Gastrocnemius medialis (tissue), 4 donors: ENCODE measurements at regions of chr11 and their contacts with region 1.

Region 1: GRCh38 chr11:115759622-115760460 is 255.6 kb upstream of the CADM1 start:
- DNase-seq: no peak
- ATAC-seq: peak; percentile 34 to 36
- H3K4me3 ChIP-seq: peak overlapping the region; percentile 53 to 68 (median 60)
- H3K27ac ChIP-seq: no peak overlapping the region
- H3K4me1 ChIP-seq: peaks cover 6 to 9% of the 10 kb centered on the region in 2 donors
- H3K27me3 ChIP-seq: peaks cover 0 to 8% (median 6%) of the 10 kb centered on the region in 3 donors
- CTCF ChIP-seq: no peak
- POLR2A ChIP-seq: no peak

Region 2: GRCh38 chr11:115606498-115607220 is 153.2 kb before region 1 on chr11:
- in situ Hi-C with region 1: no loop called
- intact Hi-C with region 1: loop called (anchors 5 kb)
- DNase-seq: peak in 1 of 2 donors; percentile 24
- ATAC-seq: peak; percentile 53 to 57
- H3K4me3 ChIP-seq: no peak overlapping the region
- H3K27ac ChIP-seq: peak overlapping the region in 2 of 4 donors; percentile 40 to 49
- H3K4me1 ChIP-seq: peaks cover 15 to 18% of the 10 kb centered on the region in 2 donors
- H3K27me3 ChIP-seq: no peaks in the 10 kb centered on the region
- CTCF ChIP-seq: no peak
- POLR2A ChIP-seq: no peak

Region 3: GRCh38 chr11:115623021-115623451 is 136.8 kb before region 1 on chr11:
- in situ Hi-C with region 1: no loop called
- intact Hi-C with region 1: loop called (anchors 5 kb)
- DNase-seq: peak; percentile 72 to 86
- ATAC-seq: peak; percentile 99 to 100
- H3K4me3 ChIP-seq: no peak overlapping the region
- H3K27ac ChIP-seq: peak overlapping the region; percentile 57 to 74 (median 68)
- H3K4me1 ChIP-seq: peaks cover 11 to 12% of the 10 kb centered on the region in 2 donors
- H3K27me3 ChIP-seq: no peaks in the 10 kb centered on the region
- CTCF ChIP-seq: peak in 1 of 5 experiments; percentile 20
- POLR2A ChIP-seq: no peak

Region 4: DNA sequence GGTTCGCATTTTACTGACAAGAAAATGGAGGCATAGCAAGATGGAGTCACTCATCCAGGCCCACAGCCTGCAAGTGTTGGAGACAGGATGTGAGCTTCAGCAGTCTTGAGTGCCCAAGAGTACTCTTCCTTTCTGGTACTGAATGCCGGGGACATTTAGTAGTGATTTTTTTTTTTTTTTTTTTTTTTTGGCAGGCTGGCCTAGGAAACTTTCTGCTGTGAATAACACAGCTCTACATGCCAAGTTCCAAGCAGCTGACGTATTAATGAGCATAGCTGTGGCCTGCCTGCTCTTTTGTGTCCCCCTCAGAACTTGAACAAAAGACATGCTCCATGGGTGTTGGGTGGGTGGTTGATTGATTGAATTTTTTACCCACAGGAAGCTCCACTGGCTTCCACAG is 60.1 kb before region 1 on chr11:
- in situ Hi-C with region 1: no loop called
- intact Hi-C with region 1: no loop called
- DNase-seq: no peak
- ATAC-seq: peak; percentile 36 to 81
- H3K4me3 ChIP-seq: no peak overlapping the region
- H3K27ac ChIP-seq: no peak overlapping the region
- H3K4me1 ChIP-seq: peaks cover 5 to 20% of the 10 kb centered on the region in 2 donors
- H3K27me3 ChIP-seq: no peaks in the 10 kb centered on the region
- CTCF ChIP-seq: no peak
- POLR2A ChIP-seq: no peak

Region 5: DNA sequence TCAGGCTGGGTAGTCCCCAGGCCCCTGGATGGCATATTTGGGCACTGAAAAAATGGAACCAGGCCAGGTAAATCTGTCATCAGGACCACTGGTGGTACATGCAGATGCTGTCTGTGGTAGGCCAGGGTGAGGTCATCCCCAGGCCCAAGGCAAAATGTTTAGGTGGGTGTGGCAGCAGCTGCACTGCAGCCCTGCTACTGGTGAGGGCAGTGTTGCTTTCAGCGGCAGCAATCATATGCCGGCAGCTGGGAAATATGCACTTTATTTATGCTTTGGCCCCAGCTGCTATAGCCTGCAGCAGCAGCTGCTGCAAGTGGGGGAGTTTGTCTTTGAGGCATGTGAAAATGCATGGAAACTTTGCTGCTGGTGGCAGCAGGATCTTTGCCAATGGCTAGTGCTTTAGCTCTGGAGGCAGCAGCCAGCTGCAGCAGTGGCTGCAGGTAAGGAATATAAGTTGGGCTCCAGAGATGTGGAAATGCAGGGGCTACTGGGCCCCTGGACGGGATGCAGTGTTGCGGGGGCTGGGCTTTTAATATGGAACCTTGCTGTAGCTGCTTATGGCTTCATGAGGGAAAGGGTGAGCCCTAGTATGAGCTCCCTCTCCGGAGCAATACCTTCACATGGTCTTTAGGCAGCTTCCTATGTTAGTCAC is 110.1 kb after region 1 on chr11:
- in situ Hi-C with region 1: no loop called
- intact Hi-C with region 1: no loop called
- DNase-seq: no peak
- ATAC-seq: no peak
- H3K4me3 ChIP-seq: no peak overlapping the region
- H3K27ac ChIP-seq: no peak overlapping the region
- H3K4me1 ChIP-seq: no peaks in the 10 kb centered on the region
- H3K27me3 ChIP-seq: no peaks in the 10 kb centered on the region
- CTCF ChIP-seq: no peak
- POLR2A ChIP-seq: no peak

Region 6: DNA sequence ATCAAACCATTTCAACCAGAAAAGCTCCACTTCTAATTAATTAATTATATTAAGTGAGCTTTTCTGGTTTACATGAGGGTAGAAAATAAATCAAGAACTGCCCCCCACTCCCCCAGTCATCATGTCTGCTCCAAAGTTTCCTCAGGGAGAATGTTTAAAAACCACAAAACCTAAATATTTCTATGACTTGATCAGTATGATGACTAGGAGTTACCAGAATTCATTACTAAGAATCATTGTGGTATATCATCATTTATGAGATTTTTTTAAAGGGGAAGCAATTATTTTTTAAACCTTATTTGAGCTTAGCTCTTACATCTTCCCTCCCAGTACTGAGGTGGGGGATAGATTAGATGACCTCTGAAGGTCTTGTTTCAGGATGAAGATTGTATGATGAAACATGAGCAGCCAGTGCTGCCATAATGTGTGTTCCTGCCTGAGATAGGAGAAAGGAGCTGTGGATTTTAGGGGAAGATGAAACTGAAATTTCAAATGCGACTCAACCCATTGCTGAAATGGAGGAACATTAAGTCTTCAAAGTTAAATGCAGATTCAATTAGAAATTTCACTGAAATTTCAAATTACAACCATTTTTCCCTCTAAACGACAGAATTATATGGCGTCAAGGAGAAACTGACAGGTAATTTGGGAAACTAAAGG is 145.6 kb after region 1 on chr11:
- in situ Hi-C with region 1: no loop called
- intact Hi-C with region 1: no loop called
- DNase-seq: no peak
- ATAC-seq: no peak
- H3K4me3 ChIP-seq: no peak overlapping the region
- H3K27ac ChIP-seq: no peak overlapping the region
- H3K4me1 ChIP-seq: no peaks in the 10 kb centered on the region
- H3K27me3 ChIP-seq: peaks cover 0 to 5% (median 0%) of the 10 kb centered on the region in 3 donors
- CTCF ChIP-seq: no peak
- POLR2A ChIP-seq: no peak